ENCODE measurements at regions of chr14 and their contacts with region 1.

Region 1: GRCh38 chr14:51342241-51342691 is 102.2 kb downstream of the TMX1 start:
- DNase-seq: no peak
- H3K4me3 Mint-ChIP-seq: no peak overlapping the region
- H3K27ac Mint-ChIP-seq: no peak overlapping the region
- H3K4me1 Mint-ChIP-seq: no peaks in the 10 kb centered on the region
- H3K27me3 Mint-ChIP-seq: peaks cover 3% of the 10 kb centered on the region

Region 2: DNA sequence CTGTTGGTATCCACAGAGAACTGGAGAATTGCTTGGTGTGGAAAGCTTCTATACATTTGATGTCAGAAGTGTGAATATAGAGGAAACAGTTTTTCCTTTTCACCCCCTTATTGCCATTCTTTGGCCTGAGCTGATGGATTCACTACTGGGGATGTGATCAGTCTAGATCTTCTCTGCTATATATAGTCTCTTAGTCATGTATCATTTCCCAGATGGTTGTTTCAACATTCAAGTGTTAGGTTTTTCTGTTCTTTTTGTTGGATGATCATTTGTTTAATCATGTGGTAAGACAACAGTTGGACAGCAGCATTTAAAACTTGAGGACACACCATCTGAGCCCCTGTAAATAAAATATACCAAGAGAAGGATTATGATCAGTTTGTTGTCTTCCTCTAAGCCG is 72.6 kb before region 1 on chr14:
- CTCF ChIA-PET with region 1: no interaction called
- POLR2A ChIA-PET with region 1: no interaction called
- DNase-seq: no peak
- H3K4me3 Mint-ChIP-seq: no peak overlapping the region
- H3K27ac Mint-ChIP-seq: peak overlapping the region; percentile 52
- H3K4me1 Mint-ChIP-seq: no peaks in the 10 kb centered on the region
- H3K27me3 Mint-ChIP-seq: no peaks in the 10 kb centered on the region

Region 3: GRCh38 chr14:51357250-51357649 is 15.0 kb after region 1 on chr14:
- CTCF ChIA-PET with region 1: no interaction called
- POLR2A ChIA-PET with region 1: no interaction called
- DNase-seq: no peak
- H3K4me3 Mint-ChIP-seq: no peak overlapping the region
- H3K27ac Mint-ChIP-seq: no peak overlapping the region
- H3K4me1 Mint-ChIP-seq: no peaks in the 10 kb centered on the region
- H3K27me3 Mint-ChIP-seq: no peaks in the 10 kb centered on the region

Region 4: DNA sequence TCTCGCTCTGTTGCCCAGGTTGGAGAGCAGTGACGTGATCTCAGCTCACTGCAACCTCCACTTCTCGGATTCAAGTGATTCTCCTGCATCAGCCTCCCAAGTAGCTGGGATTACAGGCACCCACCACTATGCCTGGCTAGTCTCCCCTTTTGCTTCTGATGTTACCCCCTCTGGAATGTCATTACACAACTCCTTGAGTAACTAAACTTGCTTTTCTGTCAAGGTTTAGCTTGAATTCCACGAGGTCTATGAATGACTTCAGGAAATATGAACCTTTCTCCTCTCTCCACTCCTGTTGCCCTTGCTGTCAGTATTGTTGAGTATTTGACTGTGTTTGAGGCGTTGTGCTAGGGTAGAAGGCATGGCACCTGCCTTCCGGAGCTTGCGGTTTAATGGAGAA is 630.3 kb after region 1 on chr14:
- CTCF ChIA-PET with region 1: no interaction called
- POLR2A ChIA-PET with region 1: interaction called, 10 read pairs
- DNase-seq: no peak
- H3K4me3 Mint-ChIP-seq: no peak overlapping the region
- H3K27ac Mint-ChIP-seq: no peak overlapping the region
- H3K4me1 Mint-ChIP-seq: no peaks in the 10 kb centered on the region
- H3K27me3 Mint-ChIP-seq: no peaks in the 10 kb centered on the region